ENCODE measurements at regions of chr14 and their contacts with region 1.

Region 1: DNA sequence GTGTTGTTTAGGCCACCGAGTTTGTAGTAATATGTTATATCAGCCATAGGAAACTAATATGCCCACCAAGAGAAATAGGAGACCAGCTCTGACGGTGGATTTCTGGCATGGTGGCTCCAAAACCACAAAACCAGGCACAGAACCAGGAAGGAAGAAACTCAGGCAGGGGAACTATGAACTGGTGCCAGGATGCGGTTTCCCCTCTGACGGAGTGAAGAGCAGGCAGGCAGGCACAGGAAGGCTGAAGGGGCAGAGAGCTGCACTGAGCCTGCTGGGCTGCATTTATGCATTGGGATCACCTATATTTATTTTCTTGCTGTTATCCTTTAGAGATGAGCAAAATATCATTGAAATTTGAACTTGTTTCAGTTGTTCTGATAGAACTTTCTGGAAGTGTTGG is 479.4 kb downstream of the VRK1 start:
- DNase-seq: no peak
- ATAC-seq: no peak
- H3K4me3 ChIP-seq: no peak overlapping the region
- H3K27ac ChIP-seq: no peak overlapping the region
- H3K4me1 ChIP-seq: peaks cover 0 to 3% of the 10 kb centered on the region in 2 experiments; a peak in 1 of 4 replicates
- H3K27me3 ChIP-seq: no peaks in the 10 kb centered on the region
- CTCF ChIP-seq: no peak
- POLR2A ChIP-seq: no peak
- RAD21 ChIP-seq: no peak

Region 2: GRCh38 chr14:97177015-97177414 is 99.6 kb before region 1 on chr14:
- CTCF ChIA-PET with region 1: no interaction called
- POLR2A ChIA-PET with region 1: no interaction called
- RAD21 ChIA-PET with region 1: no interaction called
- intact Hi-C with region 1: loop called (anchors 1 kb)
- DNase-seq: peak; percentile 69
- ATAC-seq: peak; percentile 69
- H3K4me3 ChIP-seq: no peak overlapping the region
- H3K27ac ChIP-seq: no peak overlapping the region
- H3K4me1 ChIP-seq: peaks cover 17 to 51% of the 10 kb centered on the region in 2 experiments
- H3K27me3 ChIP-seq: no peaks in the 10 kb centered on the region
- CTCF ChIP-seq: peak; percentile 53 to 66 (median 60)
- POLR2A ChIP-seq: no peak
- RAD21 ChIP-seq: peak; percentile 77

Region 3: GRCh38 chr14:97185186-97185585 is 91.4 kb before region 1 on chr14:
- CTCF ChIA-PET with region 1: no interaction called
- POLR2A ChIA-PET with region 1: no interaction called
- RAD21 ChIA-PET with region 1: no interaction called
- intact Hi-C with region 1: loop called (anchors 1 kb)
- DNase-seq: no peak
- ATAC-seq: peak; percentile 45
- H3K4me3 ChIP-seq: no peak overlapping the region
- H3K27ac ChIP-seq: no peak overlapping the region
- H3K4me1 ChIP-seq: peaks cover 8 to 16% of the 10 kb centered on the region in 2 experiments
- H3K27me3 ChIP-seq: no peaks in the 10 kb centered on the region
- CTCF ChIP-seq: peak; percentile 59 to 68 (median 61); a peak in 5 of 6 replicates
- POLR2A ChIP-seq: no peak
- RAD21 ChIP-seq: peak; percentile 79

Region 4: DNA sequence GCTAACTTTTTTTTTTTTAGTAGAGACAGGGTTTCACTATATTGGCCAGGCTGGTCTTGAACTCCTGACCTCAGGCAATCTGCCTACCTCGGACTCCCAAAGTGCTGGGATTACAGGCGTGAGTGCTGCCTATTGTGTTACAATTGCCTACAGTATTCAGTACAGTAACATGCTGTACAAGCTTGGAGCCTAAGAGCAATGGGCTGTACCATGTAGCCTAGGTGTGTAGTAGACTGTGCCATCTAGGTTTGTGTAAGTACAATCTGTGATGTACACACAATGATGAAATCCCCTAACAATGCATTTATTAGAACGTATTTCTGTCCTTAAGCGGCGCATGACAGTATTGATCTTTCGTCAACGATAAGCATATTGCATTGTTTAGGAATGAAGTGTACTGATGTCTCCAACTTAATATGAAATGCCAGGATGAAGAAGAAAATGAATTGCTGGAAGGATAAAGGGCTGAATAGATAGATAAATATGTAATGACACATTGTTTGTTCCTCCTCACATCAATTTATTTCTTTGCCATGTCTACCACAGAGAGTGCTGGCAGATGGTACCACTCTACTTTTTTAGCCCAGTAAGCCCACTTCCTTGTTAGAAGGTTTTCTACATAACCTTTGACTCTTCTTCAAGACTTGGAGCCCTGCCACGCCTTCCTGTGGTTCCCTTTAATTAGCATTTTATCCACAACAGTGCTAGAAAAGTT is 11.9 kb before region 1 on chr14:
- CTCF ChIA-PET with region 1: no interaction called
- POLR2A ChIA-PET with region 1: no interaction called
- RAD21 ChIA-PET with region 1: no interaction called
- intact Hi-C with region 1: no loop called
- DNase-seq: no peak
- ATAC-seq: peak; percentile 56
- H3K4me3 ChIP-seq: no peak overlapping the region
- H3K27ac ChIP-seq: no peak overlapping the region
- H3K4me1 ChIP-seq: peaks cover 26 to 47% of the 10 kb centered on the region in 2 experiments
- H3K27me3 ChIP-seq: no peaks in the 10 kb centered on the region
- CTCF ChIP-seq: no peak
- POLR2A ChIP-seq: no peak
- RAD21 ChIP-seq: no peak

Region 5: GRCh38 chr14:97329701-97330100 is 53.1 kb after region 1 on chr14:
- CTCF ChIA-PET with region 1: no interaction called
- POLR2A ChIA-PET with region 1: no interaction called
- RAD21 ChIA-PET with region 1: no interaction called
- intact Hi-C with region 1: no loop called
- DNase-seq: no peak
- ATAC-seq: no peak
- H3K4me3 ChIP-seq: no peak overlapping the region
- H3K27ac ChIP-seq: no peak overlapping the region
- H3K4me1 ChIP-seq: no peaks in the 10 kb centered on the region
- H3K27me3 ChIP-seq: no peaks in the 10 kb centered on the region
- CTCF ChIP-seq: no peak
- POLR2A ChIP-seq: no peak
- RAD21 ChIP-seq: no peak

Region 6: DNA sequence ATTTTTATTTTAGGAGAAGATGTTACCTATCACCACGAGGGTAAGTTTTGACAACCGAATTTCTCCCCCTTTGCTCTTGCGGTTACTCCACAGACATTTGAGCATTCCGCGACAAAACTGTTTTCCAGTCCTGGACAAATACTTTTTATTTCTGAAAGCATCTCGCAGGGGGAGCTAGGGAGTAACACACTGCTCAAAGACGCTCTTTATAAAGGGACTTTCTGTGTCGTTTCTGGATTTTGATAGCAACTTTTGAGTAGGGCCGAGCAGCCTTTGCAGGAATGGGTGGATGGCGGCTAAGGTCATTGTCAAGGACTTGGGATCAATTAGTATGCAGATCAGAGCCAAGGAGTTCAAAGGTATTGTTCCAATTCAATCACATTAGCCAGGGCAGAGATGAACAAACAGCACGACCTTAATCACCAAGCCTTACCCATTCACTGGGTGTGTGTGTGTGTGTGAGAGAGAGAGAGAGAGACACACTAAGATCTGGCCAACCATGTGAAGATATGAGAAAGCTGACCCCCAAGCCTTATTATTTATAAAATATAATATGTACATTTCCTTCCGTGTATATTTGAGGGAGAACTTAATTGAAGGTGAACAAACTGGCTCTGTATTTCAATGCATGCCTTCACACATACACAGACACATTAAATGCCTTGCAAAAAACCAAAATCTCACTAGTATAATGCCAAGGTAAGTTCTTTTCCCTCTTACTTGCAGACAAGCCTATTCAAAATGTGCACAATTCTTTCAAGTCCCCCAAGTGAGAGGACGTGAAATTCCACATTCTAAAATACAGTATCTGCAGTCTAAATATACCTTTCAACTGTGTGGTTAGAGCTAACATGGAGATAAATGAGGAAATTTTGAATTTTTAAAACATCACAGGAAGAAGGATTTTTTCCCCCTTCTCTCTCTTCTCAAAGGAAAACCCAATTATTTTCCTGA is 134.4 kb after region 1 on chr14:
- CTCF ChIA-PET with region 1: no interaction called
- POLR2A ChIA-PET with region 1: no interaction called
- RAD21 ChIA-PET with region 1: no interaction called
- intact Hi-C with region 1: no loop called
- DNase-seq: no peak
- ATAC-seq: peak; percentile 55; the same call in 1 of the 2 replicates
- H3K4me3 ChIP-seq: no peak overlapping the region
- H3K27ac ChIP-seq: no peak overlapping the region
- H3K4me1 ChIP-seq: no peaks in the 10 kb centered on the region
- H3K27me3 ChIP-seq: peaks cover 30% of the 10 kb centered on the region
- CTCF ChIP-seq: peak in 1 of 3 experiments; percentile 18; a peak in 1 of 6 replicates
- POLR2A ChIP-seq: no peak
- RAD21 ChIP-seq: 0 out of 2 replicates have a peak, but pooled peaks have one; percentile 5

Measured in HCT116 (cell line).